ENCODE measurements at regions of chr1 and their contacts with region 1.

Region 1: GRCh38 chr1:9494929-9495758 is 44.1 kb upstream of the SLC25A33 start:
- DNase-seq: peak; percentile 81
- ATAC-seq: peak; percentile 80

Region 2: DNA sequence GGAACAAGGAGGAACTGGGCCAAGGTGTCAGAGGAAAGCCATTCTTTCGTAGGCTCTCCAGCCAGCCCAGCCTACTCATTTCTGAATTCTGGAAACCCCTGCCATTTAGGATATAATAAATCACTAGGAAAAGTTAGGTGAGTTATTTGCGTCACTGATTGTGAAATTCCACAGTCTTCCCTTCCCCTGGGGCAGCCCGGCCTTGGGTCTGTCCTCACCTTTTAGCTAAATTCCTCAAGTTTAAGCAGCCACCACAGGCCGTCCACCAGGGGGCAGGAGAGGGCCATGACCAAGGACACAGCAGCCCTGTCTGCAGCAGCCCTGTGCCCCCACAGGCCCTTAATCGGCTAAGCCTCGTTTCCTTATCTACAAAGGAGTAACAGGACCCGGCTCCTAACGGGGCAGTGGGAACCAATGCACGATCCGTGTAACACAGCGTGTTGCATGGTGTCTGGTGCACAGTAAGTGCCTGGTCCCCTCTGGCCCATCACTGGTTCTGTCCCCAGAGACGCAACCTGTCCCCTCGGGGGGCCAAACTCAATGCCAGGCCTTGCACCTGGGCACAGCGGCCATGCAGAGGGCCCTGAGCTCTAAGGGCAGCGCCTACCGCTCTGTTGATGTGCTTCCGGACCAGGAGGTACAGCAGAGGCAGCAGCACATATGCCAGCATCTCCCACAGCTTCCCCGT is 384.3 kb before region 1 on chr1:
- intact Hi-C with region 1: loop called (anchors 5 kb)
- DNase-seq: peak; percentile 95
- ATAC-seq: peak; percentile 75

Region 3: GRCh38 chr1:9269078-9269501 is 226.1 kb before region 1 on chr1:
- intact Hi-C with region 1: loop called (anchors 2 kb)
- DNase-seq: no peak
- ATAC-seq: no peak

Region 4: DNA sequence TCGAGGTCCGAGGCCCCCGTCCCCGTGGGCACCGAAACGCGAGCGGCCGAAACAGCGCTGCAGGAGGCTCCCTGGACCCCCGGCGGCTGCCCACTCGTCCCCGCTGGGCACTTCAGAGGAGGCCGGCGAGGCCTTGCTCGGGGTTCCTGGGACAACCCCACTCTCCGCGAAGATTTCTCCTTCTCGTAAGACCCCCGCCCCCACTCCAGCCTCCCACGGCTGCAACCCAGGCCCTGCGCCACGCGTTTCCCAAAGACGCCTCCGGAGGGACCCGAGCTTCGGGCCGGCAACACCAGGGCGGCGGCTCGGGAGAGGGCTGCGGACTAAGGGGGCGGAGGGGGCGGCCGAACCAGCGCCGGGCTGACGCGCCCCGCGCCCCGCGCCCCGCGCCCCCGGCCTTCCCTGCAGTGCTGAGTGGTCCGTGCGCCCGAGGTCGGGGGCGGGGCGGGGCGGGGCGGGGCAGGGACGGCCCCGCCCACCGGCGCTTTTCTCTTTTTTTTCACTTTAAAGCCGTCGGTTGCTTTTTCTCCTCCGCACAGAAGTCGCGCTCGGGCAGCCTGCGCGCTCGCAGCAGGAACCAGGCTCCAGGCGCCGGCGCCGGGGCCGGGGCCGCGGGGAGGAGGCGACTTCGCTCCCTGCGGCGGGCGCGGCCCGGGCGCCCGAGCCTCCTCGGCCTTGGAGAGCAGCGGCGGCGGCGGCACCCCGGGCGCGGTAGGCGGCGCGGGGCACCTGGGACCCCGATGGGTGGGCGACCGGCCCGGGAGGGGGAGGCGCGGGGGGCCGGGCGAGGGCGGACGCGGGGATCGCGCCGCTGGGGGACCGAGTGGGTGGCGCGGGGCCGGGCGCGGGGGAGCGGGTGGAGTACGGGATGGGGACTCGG is 202.5 kb before region 1 on chr1 and contains the start of gene SPSB1:
- intact Hi-C with region 1: loop called (anchors 1 kb)
- DNase-seq: peak; percentile 82
- ATAC-seq: peak; percentile 75
- total RNA-seq, gene SPSB1: 16.5 TPM

Region 5: GRCh38 chr1:9302745-9303524 is 192.2 kb before region 1 on chr1:
- intact Hi-C with region 1: no loop called
- DNase-seq: no peak
- ATAC-seq: peak; percentile 43

Region 6: DNA sequence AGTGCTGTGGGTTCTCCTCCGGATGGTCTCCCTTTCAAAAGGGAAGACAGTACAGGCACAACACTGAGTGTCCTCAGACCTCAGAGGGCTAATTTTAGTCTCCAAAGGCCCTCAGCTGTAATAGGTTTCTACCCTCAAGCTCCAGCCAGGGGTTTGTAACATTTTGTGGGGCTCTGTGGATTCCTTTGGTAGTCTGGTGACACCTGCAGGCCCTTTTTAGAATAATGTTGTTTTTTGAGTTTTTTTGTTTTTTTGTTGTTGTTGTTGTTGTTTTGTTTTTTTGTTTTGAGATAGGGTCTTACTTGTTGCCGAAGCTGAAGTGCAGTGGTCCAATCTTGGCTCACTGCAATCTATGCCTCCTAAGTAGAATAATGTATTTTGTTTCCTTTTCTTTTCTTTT is 78.6 kb after region 1 on chr1:
- intact Hi-C with region 1: loop called (anchors 1 kb)
- DNase-seq: no peak
- ATAC-seq: peak; percentile 46